MCF 10A (cell line): ENCODE measurements at regions of chr11 and their contacts with region 1.

Region 1: GRCh38 chr11:124622531-124623451 is at the start of gene TBRG1:
- DNase-seq: peak; percentile 87
- H3K4me3 Mint-ChIP-seq: peak within 1 kb of the TSS; percentile 95
- H3K27ac Mint-ChIP-seq: peak within 1 kb of the TSS; percentile 99
- H3K4me1 Mint-ChIP-seq: peaks cover 17% of the 10 kb centered on the region
- H3K27me3 Mint-ChIP-seq: peaks cover 16% of the 10 kb centered on the region
- CTCF ChIP-seq: no peak
- total RNA-seq, gene TBRG1: 46.9 and 54.0 TPM in 2 replicates

Region 2: DNA sequence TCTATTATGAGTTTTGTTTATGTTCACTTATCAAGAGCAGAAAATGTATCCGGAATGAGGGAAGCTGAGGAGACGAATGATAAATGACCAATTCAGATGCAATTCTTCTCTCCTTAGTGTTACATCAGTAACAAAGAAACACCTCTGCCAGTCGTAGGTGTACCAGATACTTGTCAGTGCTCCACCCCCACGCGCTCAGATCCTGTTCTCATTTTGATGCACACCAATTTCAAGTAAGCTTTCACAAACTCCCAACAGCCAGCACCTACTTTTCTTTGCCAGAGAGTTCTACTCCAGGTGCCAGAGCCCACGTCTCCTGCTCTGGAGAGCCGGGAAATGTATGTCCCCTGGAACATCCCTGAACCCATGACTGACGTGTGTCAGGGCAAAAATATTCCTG is 123.1 kb before region 1 on chr11:
- CTCF ChIA-PET with region 1: no interaction called
- POLR2A ChIA-PET with region 1: no interaction called
- intact Hi-C with region 1: no loop called
- DNase-seq: no peak
- H3K4me3 Mint-ChIP-seq: no peak overlapping the region
- H3K27ac Mint-ChIP-seq: no peak overlapping the region
- H3K4me1 Mint-ChIP-seq: no peaks in the 10 kb centered on the region
- H3K27me3 Mint-ChIP-seq: peaks cover 29% of the 10 kb centered on the region
- CTCF ChIP-seq: no peak

Region 3: GRCh38 chr11:124556828-124557227 is 66.0 kb before region 1 on chr11:
- CTCF ChIA-PET with region 1: no interaction called
- POLR2A ChIA-PET with region 1: no interaction called
- intact Hi-C with region 1: no loop called
- DNase-seq: no peak
- H3K4me3 Mint-ChIP-seq: no peak overlapping the region
- H3K27ac Mint-ChIP-seq: no peak overlapping the region
- H3K4me1 Mint-ChIP-seq: no peaks in the 10 kb centered on the region
- H3K27me3 Mint-ChIP-seq: peaks cover 37% of the 10 kb centered on the region
- CTCF ChIP-seq: no peak

Region 4: DNA sequence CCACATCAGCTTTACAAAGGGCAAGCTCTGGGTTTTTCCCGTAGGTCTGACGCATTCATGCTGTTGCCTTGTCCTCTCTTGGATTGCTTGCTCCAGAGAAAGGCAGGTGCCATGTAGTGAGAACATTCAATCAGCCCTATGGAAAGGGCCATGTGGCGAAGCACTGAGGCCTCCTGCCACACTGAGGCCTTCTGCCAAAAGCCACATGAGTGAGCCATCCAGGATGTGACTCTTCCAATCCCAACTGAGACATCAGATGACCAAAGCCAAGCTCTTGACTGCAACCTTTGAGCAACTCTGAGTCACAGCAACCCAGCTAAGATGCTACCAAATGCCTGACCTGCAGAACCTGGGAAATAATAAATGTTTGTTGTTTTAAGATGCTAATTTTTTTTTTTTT is 20.6 kb before region 1 on chr11:
- CTCF ChIA-PET with region 1: no interaction called
- POLR2A ChIA-PET with region 1: interaction called, 10 read pairs
- intact Hi-C with region 1: no loop called
- DNase-seq: peak; percentile 52
- H3K4me3 Mint-ChIP-seq: no peak overlapping the region
- H3K27ac Mint-ChIP-seq: no peak overlapping the region
- H3K4me1 Mint-ChIP-seq: no peaks in the 10 kb centered on the region
- H3K27me3 Mint-ChIP-seq: peaks cover 35% of the 10 kb centered on the region
- CTCF ChIP-seq: no peak

Region 5: DNA sequence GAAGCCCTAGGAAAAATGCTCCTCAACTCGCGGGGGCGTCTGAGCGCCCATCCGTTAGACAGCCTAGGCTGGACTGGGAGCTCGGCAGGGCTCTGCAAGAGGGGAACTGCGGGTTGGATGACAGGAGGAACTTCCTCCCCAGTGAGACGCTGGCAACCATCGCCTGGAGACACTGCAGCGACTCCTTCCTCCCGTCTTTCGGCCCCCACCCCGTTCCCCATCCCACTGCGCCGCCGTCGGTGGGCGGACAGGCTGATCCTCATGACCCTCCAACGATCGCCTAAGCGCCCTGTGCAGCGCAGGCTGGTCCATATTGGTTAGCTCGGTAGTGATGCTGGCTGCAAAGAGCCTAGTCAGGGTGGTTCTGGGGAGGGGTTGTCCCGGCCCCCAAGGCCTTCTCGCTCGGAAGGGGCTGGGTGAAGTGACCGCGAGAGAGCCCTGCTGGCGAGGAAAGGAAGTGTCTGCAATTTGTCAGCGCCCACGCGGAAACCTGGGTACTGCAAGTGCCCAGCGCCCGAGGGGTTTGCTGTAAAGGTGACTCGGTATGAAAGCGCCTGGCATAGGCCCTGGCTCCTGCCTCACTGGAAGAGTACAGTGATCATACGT is 117.6 kb after region 1 on chr11:
- CTCF ChIA-PET with region 1: no interaction called
- POLR2A ChIA-PET with region 1: no interaction called
- intact Hi-C with region 1: no loop called
- DNase-seq: peak; percentile 36
- H3K4me3 Mint-ChIP-seq: peak overlapping the region; percentile 64
- H3K27ac Mint-ChIP-seq: no peak overlapping the region
- H3K4me1 Mint-ChIP-seq: no peaks in the 10 kb centered on the region
- H3K27me3 Mint-ChIP-seq: peaks cover 11% of the 10 kb centered on the region
- CTCF ChIP-seq: peak; percentile 36